Common myeloid progenitor, CD34-positive (primary cell): ENCODE measurements at regions of chr16 and their contacts with region 1.

Region 1: GRCh38 chr16:27179500-27180072 is 23.7 kb upstream of the KDM8 start:
- DNase-seq: peak; percentile 87 to 95 (median 93)
- H3K4me3 ChIP-seq: peak overlapping the region in 1 of 7 experiments; percentile 17
- H3K27ac ChIP-seq: no peak overlapping the region
- H3K4me1 ChIP-seq: peaks cover 7 to 23% (median 23%) of the 10 kb centered on the region in 4 experiments
- H3K27me3 ChIP-seq: no peaks in the 10 kb centered on the region

Region 2: DNA sequence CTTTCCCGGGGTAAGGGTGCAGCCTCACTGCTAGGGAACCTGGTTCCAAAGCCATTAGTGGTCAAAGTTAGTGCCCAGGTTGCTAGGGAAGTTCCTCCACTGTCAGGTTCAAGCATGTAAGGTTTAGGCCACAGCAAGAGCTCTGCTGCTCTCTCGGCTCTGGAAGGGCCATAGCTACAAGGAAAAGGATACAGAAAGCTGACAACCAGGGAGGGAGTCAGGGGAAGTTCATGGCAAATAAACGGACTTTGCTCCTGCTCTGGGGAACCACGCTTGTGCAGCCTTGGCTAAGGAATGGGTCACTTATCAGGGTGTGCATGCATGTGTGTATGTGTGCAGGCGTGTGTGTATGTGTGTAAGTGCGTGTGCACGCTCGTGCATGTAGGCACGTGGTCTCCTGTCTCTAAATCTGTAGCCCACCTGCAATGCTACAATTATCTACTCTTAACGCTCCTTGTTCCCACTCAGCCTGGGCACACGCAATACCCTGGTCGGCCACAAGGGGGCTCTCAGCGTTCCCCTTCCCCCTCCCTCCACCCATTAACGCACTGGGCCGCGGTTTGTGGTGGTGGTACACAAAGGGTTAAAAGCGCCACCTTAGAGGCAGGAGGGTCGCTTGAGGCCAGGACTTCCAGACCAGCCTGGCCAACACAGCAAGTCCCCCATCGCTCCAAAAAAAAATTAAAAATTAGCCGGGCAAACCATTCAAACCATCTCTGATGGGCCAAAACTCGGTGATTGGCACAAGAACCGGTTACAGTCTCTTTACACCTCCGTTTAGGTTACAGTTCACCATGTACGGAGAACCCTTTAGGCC is 24.7 kb before region 1 on chr16:
- CTCF ChIA-PET with region 1: interaction called, 33 read pairs
- POLR2A ChIA-PET with region 1: no interaction called
- DNase-seq: peak in 2 of 3 donors; percentile 53 to 57
- H3K4me3 ChIP-seq: no peak overlapping the region
- H3K27ac ChIP-seq: no peak overlapping the region
- H3K4me1 ChIP-seq: peaks cover 0 to 17% (median 11%) of the 10 kb centered on the region in 4 experiments
- H3K27me3 ChIP-seq: no peaks in the 10 kb centered on the region

Region 3: DNA sequence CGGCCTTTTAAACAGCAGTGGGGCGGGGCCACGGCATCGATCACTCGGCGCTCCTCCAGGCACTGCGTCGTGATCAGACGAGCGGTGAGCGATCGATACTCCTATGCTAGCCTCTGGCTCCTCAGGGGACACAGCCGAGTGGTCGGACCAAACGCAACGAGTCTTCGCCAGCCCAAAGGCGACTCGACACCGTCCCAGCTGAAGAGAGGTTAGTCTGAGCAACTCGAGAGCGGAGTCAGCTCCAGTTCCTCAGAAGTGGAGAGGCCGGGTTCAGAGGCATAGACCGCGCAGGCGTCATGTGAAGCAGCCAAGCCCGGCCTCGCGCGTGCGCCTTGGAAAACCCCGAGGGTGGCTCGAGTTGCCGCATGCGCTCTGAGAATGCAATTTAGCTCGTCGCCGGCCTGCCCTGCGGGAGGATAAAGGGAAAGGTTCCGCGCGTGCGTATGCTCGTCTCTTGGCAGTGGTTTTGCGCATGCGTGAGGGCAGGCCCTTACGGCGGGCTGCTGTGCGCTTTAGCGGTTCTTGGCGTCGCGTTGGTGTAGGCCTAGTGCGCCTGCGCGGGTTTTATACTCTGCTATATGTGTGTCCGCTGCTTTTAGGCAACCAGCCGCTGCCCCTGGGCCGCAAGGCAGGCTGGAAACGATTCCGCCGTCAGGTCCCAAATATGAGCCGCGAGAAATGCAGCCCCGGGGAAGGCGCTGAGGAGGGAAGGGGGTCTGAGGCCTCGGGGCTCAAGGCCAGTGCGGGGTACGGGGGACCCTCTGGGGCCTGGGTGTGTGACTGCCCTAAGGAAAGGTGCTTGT is 24.0 kb after region 1 on chr16 and contains the start of gene KDM8:
- CTCF ChIA-PET with region 1: interaction called, 16 read pairs
- POLR2A ChIA-PET with region 1: interaction called, 3 read pairs
- DNase-seq: peak; percentile 99 to 100 (median 100)
- H3K4me3 ChIP-seq: peak within 1 kb of the TSS; percentile 84 to 97 (median 91)
- H3K27ac ChIP-seq: peak within 1 kb of the TSS; percentile 95 to 97
- H3K4me1 ChIP-seq: peaks cover 20 to 29% (median 25%) of the 10 kb centered on the region in 4 experiments
- H3K27me3 ChIP-seq: no peaks in the 10 kb centered on the region

Region 4: GRCh38 chr16:27235055-27235937 is 55.7 kb after region 1 on chr16:
- CTCF ChIA-PET with region 1: interaction called, 38 read pairs
- POLR2A ChIA-PET with region 1: no interaction called
- DNase-seq: peak; percentile 95 to 99 (median 98)
- H3K4me3 ChIP-seq: peak overlapping the region in 4 of 7 experiments; percentile 21 to 43 (median 34)
- H3K27ac ChIP-seq: peak overlapping the region; percentile 48 to 79
- H3K4me1 ChIP-seq: peaks cover 15 to 99% (median 93%) of the 10 kb centered on the region in 4 experiments
- H3K27me3 ChIP-seq: no peaks in the 10 kb centered on the region

Region 5: DNA sequence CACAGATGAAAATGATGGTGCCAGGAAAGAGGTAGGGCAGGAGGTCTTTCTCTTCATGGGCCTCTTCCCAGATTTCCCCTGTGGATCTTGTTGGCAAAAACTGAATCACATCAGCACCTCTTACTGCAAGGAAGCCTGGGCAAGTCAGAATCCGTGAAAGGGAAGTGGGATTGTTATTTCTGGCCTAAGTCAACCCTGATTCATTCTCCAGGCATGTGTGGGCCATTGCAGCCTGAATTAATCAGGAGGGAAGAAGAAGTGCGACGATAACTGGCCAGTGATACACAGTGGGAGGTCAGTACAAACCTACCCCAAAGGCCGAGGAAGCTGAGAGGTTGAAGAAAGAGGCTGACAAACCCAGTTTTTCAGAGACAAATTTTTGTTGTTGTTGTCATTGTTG is 106.9 kb after region 1 on chr16:
- CTCF ChIA-PET with region 1: no interaction called
- POLR2A ChIA-PET with region 1: no interaction called
- DNase-seq: no peak
- H3K4me3 ChIP-seq: no peak overlapping the region
- H3K27ac ChIP-seq: no peak overlapping the region
- H3K4me1 ChIP-seq: peaks cover 0 to 10% (median 6%) of the 10 kb centered on the region in 4 experiments
- H3K27me3 ChIP-seq: no peaks in the 10 kb centered on the region

Region 6: GRCh38 chr16:27367461-27368357 is 188.1 kb after region 1 on chr16:
- CTCF ChIA-PET with region 1: interaction called, 30 read pairs
- POLR2A ChIA-PET with region 1: interaction called, 8 read pairs
- DNase-seq: peak; percentile 98 to 99 (median 99)
- H3K4me3 ChIP-seq: peak overlapping the region in 5 of 7 experiments; percentile 13 to 54 (median 45)
- H3K27ac ChIP-seq: peak overlapping the region; percentile 90 to 93
- H3K4me1 ChIP-seq: peaks cover 4 to 35% (median 30%) of the 10 kb centered on the region in 4 experiments
- H3K27me3 ChIP-seq: no peaks in the 10 kb centered on the region